Activated T-helper 1 cell treated with anti-CD3 and anti-CD28 coated beads, Interleukin-12 subunit alpha, Interleukin-12 subunit beta, Interleukin-2, Interleukin-4 antibody, amounts not matched to agents 30 ng/mL and 10 ng/mL and 1 ng/mL, durations not matched to agents 14 hours and 24 hours and 36 hours (primary cell): ENCODE measurements at regions of chr1 and their contacts with region 1.

Region 1: DNA sequence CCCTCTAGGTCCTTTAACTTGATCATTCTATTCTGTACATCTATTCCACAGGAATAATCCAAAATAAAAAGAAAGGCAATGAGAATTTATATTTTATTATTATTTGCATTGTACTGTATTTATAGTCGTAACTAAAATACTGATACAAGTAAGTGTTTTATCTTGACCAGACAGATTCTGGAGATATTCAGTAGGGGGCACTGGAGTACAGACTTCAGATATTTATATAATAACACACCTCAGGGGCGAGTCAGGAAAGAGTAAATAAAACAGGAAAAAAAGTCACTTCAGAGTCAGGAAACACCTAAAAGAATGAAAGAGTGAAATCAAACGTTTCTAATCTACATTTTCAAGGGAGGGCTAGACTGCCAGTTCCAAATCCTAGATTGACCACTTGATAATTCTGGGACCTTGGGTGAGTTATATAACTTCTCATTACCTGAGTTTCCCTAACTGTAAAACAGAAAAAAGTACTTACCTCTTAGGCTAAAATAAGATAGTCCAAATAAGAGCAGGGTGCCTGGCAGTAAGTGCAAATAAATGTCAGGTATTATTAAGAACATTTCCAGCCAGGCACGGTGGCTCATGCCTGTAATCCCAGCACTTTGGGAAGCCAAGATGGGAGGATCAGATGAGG is 31.1 kb upstream of the MTF1 start:
- DNase-seq: no peak
- H3K4me3 Mint-ChIP-seq: no peak overlapping the region
- H3K27ac Mint-ChIP-seq: no peak overlapping the region
- H3K4me1 Mint-ChIP-seq: no peaks in the 10 kb centered on the region
- H3K27me3 Mint-ChIP-seq: no peaks in the 10 kb centered on the region

Region 2: DNA sequence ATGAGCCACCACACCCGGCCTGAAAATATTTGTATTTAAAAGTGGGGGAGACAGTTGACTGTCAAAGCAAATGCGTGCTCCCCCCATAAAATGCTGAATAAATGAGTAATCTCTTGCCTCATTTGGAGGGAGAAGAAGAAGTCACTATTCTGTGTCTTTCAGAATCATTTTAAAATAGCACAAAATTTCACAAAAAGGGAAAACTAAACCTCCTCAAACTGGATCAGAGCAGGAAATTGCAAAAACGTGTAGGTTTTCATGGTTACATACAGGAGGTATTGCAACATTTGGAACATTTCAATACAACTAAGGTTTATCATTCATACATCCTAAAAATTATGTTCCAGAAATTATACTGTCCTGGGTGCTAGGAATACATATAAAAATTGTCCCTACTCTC is 44.7 kb before region 1 on chr1:
- intact Hi-C with region 1: no loop called
- DNase-seq: no peak
- H3K4me3 Mint-ChIP-seq: no peak overlapping the region
- H3K27ac Mint-ChIP-seq: no peak overlapping the region
- H3K4me1 Mint-ChIP-seq: peaks cover 30% of the 10 kb centered on the region
- H3K27me3 Mint-ChIP-seq: no peaks in the 10 kb centered on the region

Region 3: GRCh38 chr1:37978541-37978940 is 88.0 kb after region 1 on chr1:
- intact Hi-C with region 1: loop called (anchors 1 kb)
- DNase-seq: no peak
- H3K4me3 Mint-ChIP-seq: no peak overlapping the region
- H3K27ac Mint-ChIP-seq: no peak overlapping the region
- H3K4me1 Mint-ChIP-seq: no peaks in the 10 kb centered on the region
- H3K27me3 Mint-ChIP-seq: no peaks in the 10 kb centered on the region

Region 4: DNA sequence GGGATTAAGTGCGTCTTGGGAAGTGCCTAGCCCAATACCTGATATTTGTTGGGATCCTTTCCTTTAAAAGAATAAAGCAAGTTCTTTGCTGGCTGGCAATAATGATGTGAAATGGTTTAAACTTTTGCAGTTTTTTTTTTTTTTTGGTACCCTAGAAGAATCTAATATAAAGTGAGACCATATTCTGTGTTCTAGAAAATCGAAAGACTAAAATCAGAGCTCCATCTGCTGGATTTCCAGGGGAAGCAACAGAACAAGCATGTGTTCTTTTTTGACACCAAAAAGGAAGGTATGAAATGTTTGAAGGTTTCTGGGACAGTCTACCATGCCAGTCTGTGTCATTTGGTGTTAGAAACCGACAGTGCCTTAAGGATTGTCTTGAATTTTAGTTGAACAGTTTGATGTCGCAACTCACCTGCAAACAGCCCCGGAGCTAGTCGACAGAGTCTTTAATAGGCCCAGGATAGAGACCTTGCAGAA is 128.4 kb after region 1 on chr1:
- intact Hi-C with region 1: loop called (anchors 1 kb)
- DNase-seq: no peak
- H3K4me3 Mint-ChIP-seq: no peak overlapping the region
- H3K27ac Mint-ChIP-seq: peak overlapping the region; percentile 40
- H3K4me1 Mint-ChIP-seq: peaks cover 16% of the 10 kb centered on the region
- H3K27me3 Mint-ChIP-seq: no peaks in the 10 kb centered on the region

Region 5: GRCh38 chr1:38834937-38835827 is 944.7 kb after region 1 on chr1:
- intact Hi-C with region 1: loop called (anchors 1 kb)
- DNase-seq: peak; percentile 34
- H3K4me3 Mint-ChIP-seq: no peak overlapping the region
- H3K27ac Mint-ChIP-seq: no peak overlapping the region
- H3K4me1 Mint-ChIP-seq: peaks cover 7% of the 10 kb centered on the region
- H3K27me3 Mint-ChIP-seq: peaks cover 16% of the 10 kb centered on the region